Activated CD8-positive, alpha-beta T cell treated with anti-CD3 and anti-CD28 coated beads for 36 hours (primary cell): ENCODE measurements at regions of chr2 and their contacts with region 1.

Region 1: GRCh38 chr2:6917071-6917760 is at the start of gene RNF144A:
- DNase-seq: peak; percentile 67
- ATAC-seq: peak; percentile 68
- H3K4me3 Mint-ChIP-seq: peak within 1 kb of the TSS; percentile 74
- H3K27ac Mint-ChIP-seq: peak within 1 kb of the TSS; percentile 86
- H3K4me1 Mint-ChIP-seq: peaks cover 66% of the 10 kb centered on the region
- H3K27me3 Mint-ChIP-seq: no peaks in the 10 kb centered on the region
- CTCF ChIP-seq: peak; percentile 53
- total RNA-seq, gene RNF144A: 32.6 to 36.5 TPM

Region 2: DNA sequence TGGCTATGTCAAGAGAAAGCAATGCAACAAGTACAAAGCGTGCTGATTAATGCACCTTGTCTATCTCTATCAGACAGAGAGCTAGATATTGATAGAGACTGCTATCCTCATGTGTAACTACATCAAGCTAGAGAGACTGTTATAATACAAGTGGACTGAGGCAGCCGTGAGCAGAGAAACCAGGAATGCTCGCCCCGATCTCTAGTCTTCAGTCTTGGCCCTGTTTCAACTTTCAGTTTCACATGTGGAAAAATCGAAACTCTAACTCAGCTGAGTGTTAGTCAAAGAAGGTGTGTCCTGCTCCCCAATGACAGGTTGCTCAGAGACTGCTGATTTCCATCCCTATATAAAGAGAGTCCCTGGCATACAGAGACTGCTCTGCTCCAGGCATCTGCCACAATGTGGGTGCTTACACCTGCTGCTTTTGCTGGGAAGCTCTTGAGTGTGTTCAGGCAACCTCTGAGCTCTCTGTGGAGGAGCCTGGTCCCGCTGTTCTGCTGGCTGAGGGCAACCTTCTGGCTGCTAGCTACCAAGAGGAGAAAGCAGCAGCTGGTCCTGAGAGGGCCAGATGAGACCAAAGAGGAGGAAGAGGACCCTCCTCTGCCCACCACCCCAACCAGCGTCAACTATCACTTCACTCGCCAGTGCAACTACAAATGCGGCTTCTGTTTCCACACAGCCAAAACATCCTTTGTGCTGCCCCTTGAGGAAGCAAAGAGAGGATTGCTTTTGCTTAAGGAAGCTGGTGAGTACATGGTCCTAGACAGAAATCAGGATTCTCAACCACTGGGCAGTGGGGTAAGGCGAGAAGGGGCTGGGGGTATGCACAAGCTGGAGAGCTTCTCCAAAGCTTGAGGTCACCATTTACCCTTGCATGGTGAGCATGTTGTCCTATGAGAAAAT is 39.6 kb before region 1 on chr2 and contains the start of gene RSAD2:
- CTCF ChIA-PET with region 1: interaction called, 9 read pairs
- POLR2A ChIA-PET with region 1: interaction called, 10 read pairs
- intact Hi-C with region 1: no loop called
- DNase-seq: peak; percentile 40
- ATAC-seq: peak; percentile 80
- H3K4me3 Mint-ChIP-seq: peak within 1 kb of the TSS; percentile 66
- H3K27ac Mint-ChIP-seq: peak within 1 kb of the TSS; percentile 40
- H3K4me1 Mint-ChIP-seq: peaks cover 68% of the 10 kb centered on the region
- H3K27me3 Mint-ChIP-seq: no peaks in the 10 kb centered on the region
- CTCF ChIP-seq: no peak
- total RNA-seq, gene RSAD2: 2.8 to 3.7 TPM